GM13977 (cell line): ENCODE measurements at regions of chr1 and their contacts with region 1.

Region 1: DNA sequence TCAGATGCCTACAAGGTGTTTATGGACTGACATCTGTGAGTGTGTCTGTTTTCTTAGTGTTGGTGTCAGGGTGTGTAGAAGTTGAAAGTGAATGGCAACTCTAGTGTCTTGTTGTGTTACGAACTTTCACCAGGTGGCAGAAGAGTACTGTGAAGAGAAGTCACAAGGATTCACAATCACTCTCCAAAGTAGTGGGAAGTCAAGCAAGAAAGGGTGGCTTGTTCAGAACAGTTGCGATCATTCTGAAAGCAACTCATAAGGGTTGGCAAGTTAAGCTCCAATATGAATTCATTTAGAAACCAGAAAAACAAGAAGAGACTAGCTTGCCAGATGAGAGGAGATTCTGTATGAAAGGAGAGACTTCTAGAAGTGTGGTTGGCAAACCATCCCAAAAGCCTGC is 86.1 kb downstream of the FASLG start:
- DNase-seq: peak; percentile 68
- CTCF ChIP-seq: peak; percentile 65

Region 2: GRCh38 chr1:172308577-172308976 is 436.4 kb before region 1 on chr1:
- in situ Hi-C with region 1: no loop called
- DNase-seq: no peak
- CTCF ChIP-seq: no peak

Region 3: DNA sequence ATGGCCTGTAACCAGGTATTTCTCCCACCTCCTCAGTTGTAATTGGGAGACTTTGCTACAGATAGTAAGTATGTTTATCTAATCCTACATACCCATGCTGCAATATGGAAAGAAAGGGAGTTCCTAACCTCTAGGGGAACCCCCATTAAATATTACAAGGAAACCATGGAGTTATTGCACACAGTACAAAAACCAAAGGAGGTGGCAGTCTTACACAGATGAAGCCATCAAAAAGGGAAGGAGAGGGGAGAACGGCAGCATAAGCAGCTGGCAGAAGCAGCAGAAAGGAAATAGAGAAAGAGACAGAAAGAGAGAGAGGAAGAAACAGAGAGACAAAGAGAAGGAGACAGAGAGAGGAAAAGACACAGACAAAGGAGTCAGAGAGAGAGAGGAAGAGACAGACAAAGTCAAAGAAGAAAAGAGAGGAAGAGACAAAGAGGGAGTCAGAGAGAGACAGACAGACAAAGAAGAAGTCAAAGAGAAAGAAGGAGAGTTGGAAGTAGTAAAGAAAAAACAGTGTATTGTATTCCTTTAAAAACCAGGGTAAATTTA is 56.8 kb after region 1 on chr1:
- in situ Hi-C with region 1: no loop called
- DNase-seq: no peak
- CTCF ChIP-seq: no peak

Region 4: GRCh38 chr1:172818841-172819527 is 74.0 kb after region 1 on chr1:
- in situ Hi-C with region 1: loop called (anchors 5 kb)
- DNase-seq: peak; percentile 72
- CTCF ChIP-seq: no peak

Region 5: DNA sequence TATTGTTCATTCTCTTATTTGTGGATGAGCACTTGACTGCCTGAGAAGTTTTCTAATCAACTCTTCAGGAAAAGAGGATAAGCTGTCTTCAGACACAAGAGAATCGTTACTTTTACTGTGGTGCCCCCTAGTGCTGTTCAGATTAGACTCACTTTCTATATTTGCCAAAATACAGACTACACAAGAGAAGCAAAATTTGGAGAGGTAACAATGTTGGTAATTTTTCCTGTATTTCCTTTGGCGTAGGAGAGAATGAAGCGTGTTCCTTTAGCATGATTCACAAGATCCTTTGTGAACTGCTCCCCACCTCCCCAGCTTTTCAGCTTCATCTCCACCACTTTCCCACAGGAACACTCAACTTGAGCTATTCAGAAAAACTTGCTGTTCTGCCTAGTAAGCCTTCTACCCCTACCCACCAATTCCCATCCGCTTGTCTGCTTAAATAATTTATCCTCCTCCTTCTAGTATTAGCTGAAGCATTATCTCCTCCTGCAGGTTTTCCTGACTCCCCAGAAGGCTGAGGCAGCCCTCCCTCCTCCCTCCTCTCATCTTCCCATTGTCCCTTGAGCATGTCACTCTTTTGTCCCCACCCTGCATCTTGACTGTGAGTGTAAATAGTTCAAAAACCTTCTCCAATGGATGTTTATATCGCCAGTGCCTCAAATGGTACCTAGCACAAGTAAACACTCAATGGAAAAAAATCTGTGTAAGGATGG is 457.6 kb after region 1 on chr1:
- in situ Hi-C with region 1: loop called (anchors 10 kb)
- DNase-seq: no peak
- CTCF ChIP-seq: peak; percentile 64

Region 6: GRCh38 chr1:173409613-173410012 is 664.6 kb after region 1 on chr1:
- in situ Hi-C with region 1: loop called (anchors 10 kb)
- DNase-seq: no peak
- CTCF ChIP-seq: no peak

Region 7: GRCh38 chr1:173824331-173825081 is 1079.5 kb after region 1 on chr1 and contains the starts of genes CENPL and DARS2:
- in situ Hi-C with region 1: loop called (anchors 25 kb)
- DNase-seq: peak; percentile 88
- CTCF ChIP-seq: peak; percentile 19